ENCODE measurements at regions of chr15 and their contacts with region 1.

Region 1: GRCh38 chr15:39213385-39213840 is 367.5 kb upstream of the THBS1 start:
- DNase-seq: peak; percentile 84
- ATAC-seq: peak; percentile 96
- H3K4me3 ChIP-seq: peak overlapping the region in 1 of 2 experiments; percentile 21; a peak in 2 of 4 replicates
- H3K27ac ChIP-seq: peak overlapping the region; percentile 67; the same call in 1 of the 2 replicates
- H3K4me1 ChIP-seq: peaks cover 12 to 22% of the 10 kb centered on the region in 2 experiments
- H3K27me3 ChIP-seq: no peaks in the 10 kb centered on the region
- CTCF ChIP-seq: no peak
- POLR2A ChIP-seq: no peak
- RAD21 ChIP-seq: no peak

Region 2: DNA sequence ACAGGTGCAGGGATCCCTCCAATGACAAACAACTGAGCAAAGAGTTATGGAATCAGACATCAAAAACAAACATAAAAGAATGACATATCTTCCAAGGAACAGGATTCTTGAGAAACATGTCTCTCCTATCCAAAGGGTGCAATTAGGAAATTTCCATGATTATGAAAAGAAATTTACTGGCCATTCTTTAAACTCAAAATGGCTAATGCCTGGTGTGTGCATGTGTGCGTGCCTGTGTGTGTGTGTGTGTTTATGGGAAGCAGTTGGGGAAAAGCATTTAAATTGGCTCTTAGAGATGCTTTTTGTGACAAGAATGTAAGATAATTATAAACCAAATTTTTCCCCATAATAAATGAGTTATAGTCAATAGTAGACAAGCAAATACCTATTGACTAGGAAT is 47.0 kb after region 1 on chr15:
- CTCF ChIA-PET with region 1: no interaction called
- POLR2A ChIA-PET with region 1: no interaction called
- RAD21 ChIA-PET with region 1: no interaction called
- intact Hi-C with region 1: loop called (anchors 5 kb)
- DNase-seq: no peak
- ATAC-seq: no peak
- H3K4me3 ChIP-seq: no peak overlapping the region
- H3K27ac ChIP-seq: no peak overlapping the region
- H3K4me1 ChIP-seq: no peaks in the 10 kb centered on the region
- H3K27me3 ChIP-seq: no peaks in the 10 kb centered on the region
- CTCF ChIP-seq: no peak
- POLR2A ChIP-seq: no peak
- RAD21 ChIP-seq: no peak